ENCODE measurements at regions of chr2 and their contacts with region 1.

Region 1: DNA sequence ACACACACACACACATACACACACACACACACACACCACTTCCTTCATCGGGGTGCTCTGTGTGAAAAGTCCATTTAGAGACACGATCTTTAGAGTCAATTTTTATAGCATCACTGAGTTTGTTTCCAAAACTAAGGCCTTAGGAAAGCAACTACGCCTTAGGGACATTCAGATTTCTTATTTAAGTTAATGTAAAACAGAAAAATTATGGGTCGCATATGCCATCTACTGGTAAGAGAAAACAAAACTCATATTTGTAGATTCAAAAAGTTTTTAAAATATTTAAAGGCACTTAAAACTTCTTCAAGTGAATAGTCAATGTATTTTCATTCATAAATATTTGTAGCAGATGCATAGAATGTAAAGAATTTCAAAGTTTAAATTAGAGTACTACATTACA is 166.2 kb downstream of the ATAD2B start:
- DNase-seq: peak; percentile 7
- ATAC-seq: no peak
- H3K4me3 ChIP-seq: no peak overlapping the region
- H3K27ac ChIP-seq: no peak overlapping the region
- H3K4me1 ChIP-seq: peaks cover 9% of the 10 kb centered on the region; the same call in 1 of the 2 replicates
- H3K27me3 ChIP-seq: no peaks in the 10 kb centered on the region
- CTCF ChIP-seq: no peak
- EP300 ChIP-seq: no peak
- POLR2A ChIP-seq: no peak
- RAD21 ChIP-seq: no peak

Region 2: GRCh38 chr2:23624378-23624777 is 136.4 kb before region 1 on chr2:
- CTCF ChIA-PET with region 1: no interaction called
- POLR2A ChIA-PET with region 1: no interaction called
- in situ Hi-C with region 1: no loop called
- intact Hi-C with region 1: loop called (anchors 2 kb)
- DNase-seq: peak; percentile 28
- ATAC-seq: peak; percentile 62
- H3K4me3 ChIP-seq: no peak overlapping the region
- H3K27ac ChIP-seq: no peak overlapping the region
- H3K4me1 ChIP-seq: no peaks in the 10 kb centered on the region
- H3K27me3 ChIP-seq: peaks cover 0 to 12% of the 10 kb centered on the region in 2 experiments; a peak in 3 of 5 replicates
- CTCF ChIP-seq: peak; percentile 80
- EP300 ChIP-seq: no peak
- POLR2A ChIP-seq: no peak
- RAD21 ChIP-seq: no peak

Region 3: DNA sequence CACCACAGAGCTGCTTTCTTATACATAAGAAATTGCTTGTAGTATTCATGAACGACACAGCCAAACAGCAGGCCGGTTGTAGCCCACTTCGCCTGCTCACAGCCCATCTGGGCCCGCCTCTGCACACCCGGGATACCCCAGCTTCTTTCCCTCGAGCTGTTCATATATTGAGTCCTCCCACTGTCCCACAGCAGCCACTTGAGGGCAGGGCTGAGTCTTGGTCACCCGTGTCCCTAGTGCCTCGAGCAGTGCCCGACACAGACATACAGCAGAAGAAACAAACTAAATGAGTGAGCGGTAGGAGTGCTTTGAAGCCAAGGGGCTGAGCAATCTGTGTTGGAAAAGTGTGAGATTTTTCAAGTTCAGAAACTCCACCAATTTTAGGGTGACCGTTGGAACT is 124.3 kb before region 1 on chr2:
- CTCF ChIA-PET with region 1: no interaction called
- POLR2A ChIA-PET with region 1: no interaction called
- in situ Hi-C with region 1: no loop called
- intact Hi-C with region 1: loop called (anchors 1 kb)
- DNase-seq: peak; percentile 61
- ATAC-seq: peak; percentile 95
- H3K4me3 ChIP-seq: no peak overlapping the region
- H3K27ac ChIP-seq: no peak overlapping the region
- H3K4me1 ChIP-seq: no peaks in the 10 kb centered on the region
- H3K27me3 ChIP-seq: peaks cover 3 to 15% of the 10 kb centered on the region in 2 experiments; a peak in 2 of 5 replicates
- CTCF ChIP-seq: peak; percentile 78
- EP300 ChIP-seq: no peak
- POLR2A ChIP-seq: no peak
- RAD21 ChIP-seq: peak; percentile 71

Region 4: GRCh38 chr2:23976883-23977282 is 216.1 kb after region 1 on chr2:
- CTCF ChIA-PET with region 1: no interaction called
- POLR2A ChIA-PET with region 1: no interaction called
- in situ Hi-C with region 1: no loop called
- intact Hi-C with region 1: no loop called
- DNase-seq: no peak
- ATAC-seq: no peak
- H3K4me3 ChIP-seq: no peak overlapping the region
- H3K27ac ChIP-seq: no peak overlapping the region
- H3K4me1 ChIP-seq: no peaks in the 10 kb centered on the region
- H3K27me3 ChIP-seq: no peaks in the 10 kb centered on the region
- CTCF ChIP-seq: no peak
- EP300 ChIP-seq: no peak
- POLR2A ChIP-seq: no peak
- RAD21 ChIP-seq: no peak